AG04450 (cell line): ENCODE measurements at regions of chr4 and their contacts with region 1.

Region 1: DNA sequence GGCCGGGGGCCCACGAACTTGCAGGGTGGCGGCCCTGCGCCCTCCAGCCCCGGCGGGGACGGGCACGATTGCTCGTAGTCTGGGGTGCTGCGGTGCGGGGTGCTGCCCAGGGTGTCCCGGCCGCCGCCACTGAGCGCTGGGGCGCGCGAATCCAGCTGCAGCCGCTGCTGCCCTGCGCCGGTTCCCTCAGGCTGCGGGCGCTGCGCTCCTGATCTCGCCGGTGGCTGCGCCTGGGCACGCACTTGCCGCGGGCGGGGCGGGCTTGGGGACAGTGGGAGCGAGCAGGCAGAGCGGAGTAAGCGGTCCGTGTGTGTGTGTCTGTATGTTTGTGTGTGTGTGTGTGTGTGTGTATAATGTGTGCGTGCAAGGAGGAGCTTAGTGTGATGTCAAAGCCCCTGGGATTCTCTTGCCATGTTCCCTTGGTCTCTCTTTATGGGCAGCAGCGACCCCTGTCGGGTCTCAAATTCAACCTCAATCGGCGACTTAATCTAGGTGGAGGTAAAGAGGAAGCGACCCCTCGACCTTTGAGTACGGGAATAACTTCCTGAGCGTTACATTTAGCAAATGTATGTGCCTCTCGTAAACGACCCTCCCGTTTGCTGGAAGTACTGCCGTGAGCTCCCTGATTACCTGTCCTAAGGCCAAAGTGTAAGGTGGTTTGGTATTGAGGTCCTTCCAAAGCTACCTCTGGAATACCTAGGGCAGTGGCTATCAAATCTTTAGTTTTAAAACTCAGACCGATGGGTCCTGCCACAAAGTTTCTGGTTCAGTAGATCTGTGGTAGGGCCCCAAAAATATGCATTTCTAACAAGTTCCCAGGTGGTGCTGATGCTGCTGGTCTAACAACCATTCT is at the start of gene RNF150:
- DNase-seq: peak; percentile 78
- H3K4me3 ChIP-seq: peak within 1 kb of the TSS; percentile 82
- H3K27ac ChIP-seq: no peak within 1 kb of the TSS
- H3K27me3 ChIP-seq: no peaks in the 10 kb centered on the region
- CTCF ChIP-seq: peak; percentile 87
- polyA plus RNA-seq, gene RNF150: 9.8 and 10.3 TPM in 2 replicates

Region 2: DNA sequence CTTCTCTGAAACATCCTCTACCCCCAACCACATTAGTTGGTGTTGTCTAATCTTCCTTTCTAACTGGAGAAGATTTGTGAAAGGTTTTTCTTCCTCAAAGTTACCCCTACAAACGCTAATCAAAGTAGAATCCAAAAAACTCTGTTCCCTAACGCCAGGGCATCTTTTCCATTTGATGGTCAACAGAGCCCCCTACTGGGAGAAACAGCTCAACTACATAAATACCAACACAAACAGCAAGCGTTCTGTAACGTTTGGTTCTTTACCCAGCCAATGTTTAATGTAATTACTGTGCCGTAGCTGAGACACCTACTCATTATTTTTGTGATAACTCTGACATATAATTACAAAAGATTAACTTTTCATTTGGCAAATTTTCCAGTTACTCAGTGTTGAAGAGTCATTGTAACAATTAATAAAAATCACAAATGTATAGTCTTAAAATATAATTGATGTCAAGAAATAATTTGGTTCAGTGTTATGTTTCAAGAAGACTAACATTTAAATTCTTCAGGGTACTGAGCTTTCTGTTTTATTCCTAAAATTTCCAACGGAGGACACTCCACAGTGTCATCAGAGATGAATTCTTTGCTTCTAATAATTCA is 282.2 kb before region 1 on chr4:
- CTCF ChIA-PET with region 1: interaction called, 171 read pairs
- POLR2A ChIA-PET with region 1: no interaction called
- DNase-seq: peak; percentile 43
- H3K4me3 ChIP-seq: no peak overlapping the region
- H3K27ac ChIP-seq: no peak overlapping the region
- H3K27me3 ChIP-seq: no peaks in the 10 kb centered on the region
- CTCF ChIP-seq: peak; percentile 81

Region 3: GRCh38 chr4:140870427-140870826 is 262.9 kb before region 1 on chr4:
- CTCF ChIA-PET with region 1: interaction called, 51 read pairs
- POLR2A ChIA-PET with region 1: interaction called, 3 read pairs
- DNase-seq: no peak
- H3K4me3 ChIP-seq: no peak overlapping the region
- H3K27ac ChIP-seq: no peak overlapping the region
- H3K27me3 ChIP-seq: no peaks in the 10 kb centered on the region
- CTCF ChIP-seq: no peak

Region 4: DNA sequence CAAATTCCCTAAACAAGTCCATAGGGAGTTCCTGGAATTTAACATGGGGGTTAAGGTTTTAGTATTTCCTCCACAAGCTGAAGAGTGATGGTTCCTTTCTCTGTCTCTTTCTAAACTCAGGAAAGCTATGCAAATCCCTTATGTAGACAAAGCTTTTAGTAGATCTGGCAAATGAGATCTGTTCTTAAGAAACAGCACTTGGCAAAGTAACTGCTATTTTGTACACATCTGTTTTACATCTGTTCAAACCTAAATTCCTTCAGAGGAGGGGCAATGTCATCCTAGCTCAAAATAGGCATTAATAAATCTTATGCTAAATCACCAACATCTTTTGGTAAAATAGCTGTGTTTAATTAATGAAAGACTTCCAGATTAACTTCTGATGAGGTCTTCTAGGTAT is 239.4 kb before region 1 on chr4:
- CTCF ChIA-PET with region 1: interaction called, 47 read pairs
- POLR2A ChIA-PET with region 1: interaction called, 3 read pairs
- DNase-seq: peak; percentile 53
- H3K4me3 ChIP-seq: no peak overlapping the region
- H3K27ac ChIP-seq: no peak overlapping the region
- H3K27me3 ChIP-seq: no peaks in the 10 kb centered on the region
- CTCF ChIP-seq: no peak

Region 5: DNA sequence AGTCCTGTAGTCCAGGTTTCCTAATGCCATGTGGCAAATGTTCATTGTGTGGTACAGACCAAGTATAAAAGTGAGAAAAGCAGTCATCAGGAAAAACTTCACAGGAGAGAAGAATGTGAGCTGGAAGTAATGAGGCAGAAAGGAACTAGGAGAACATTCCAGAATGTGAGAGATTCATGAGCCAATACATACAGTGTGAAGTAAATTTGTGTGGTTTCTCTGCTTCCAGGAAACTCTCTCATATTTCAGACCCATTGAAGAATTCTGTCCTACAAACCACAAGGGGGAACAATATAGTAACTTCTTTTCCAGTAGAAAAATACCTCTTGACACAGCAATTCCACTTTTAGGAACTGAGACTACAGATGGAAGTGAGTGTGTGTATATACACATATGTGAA is 136.6 kb before region 1 on chr4:
- CTCF ChIA-PET with region 1: interaction called, 40 read pairs
- POLR2A ChIA-PET with region 1: interaction called, 6 read pairs
- DNase-seq: peak; percentile 18
- H3K4me3 ChIP-seq: no peak overlapping the region
- H3K27ac ChIP-seq: no peak overlapping the region
- H3K27me3 ChIP-seq: no peaks in the 10 kb centered on the region
- CTCF ChIP-seq: peak; percentile 53

Region 6: DNA sequence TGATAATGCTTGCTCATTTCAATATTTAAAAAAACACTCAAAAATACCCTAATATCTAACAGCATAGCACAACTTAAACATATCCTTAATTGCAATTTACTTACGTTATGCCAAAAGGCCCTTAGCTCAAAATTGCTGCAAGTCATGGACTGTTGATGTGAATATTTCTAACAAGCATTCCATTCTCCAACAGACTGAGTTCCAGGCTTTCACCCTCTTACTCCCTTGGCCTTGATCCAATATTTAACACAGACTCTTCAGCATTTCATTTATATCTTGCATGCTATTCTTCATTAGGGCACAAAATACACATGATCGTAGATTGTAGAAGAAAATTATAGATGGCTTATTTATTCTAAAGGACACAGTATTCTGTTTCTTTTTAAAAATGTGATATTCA is 96.6 kb before region 1 on chr4:
- CTCF ChIA-PET with region 1: interaction called, 14 read pairs
- POLR2A ChIA-PET with region 1: no interaction called
- DNase-seq: no peak
- H3K4me3 ChIP-seq: no peak overlapping the region
- H3K27ac ChIP-seq: no peak overlapping the region
- H3K27me3 ChIP-seq: no peaks in the 10 kb centered on the region
- CTCF ChIP-seq: no peak